ENCODE measurements at regions of chr1 and their contacts with region 1.

Region 1: DNA sequence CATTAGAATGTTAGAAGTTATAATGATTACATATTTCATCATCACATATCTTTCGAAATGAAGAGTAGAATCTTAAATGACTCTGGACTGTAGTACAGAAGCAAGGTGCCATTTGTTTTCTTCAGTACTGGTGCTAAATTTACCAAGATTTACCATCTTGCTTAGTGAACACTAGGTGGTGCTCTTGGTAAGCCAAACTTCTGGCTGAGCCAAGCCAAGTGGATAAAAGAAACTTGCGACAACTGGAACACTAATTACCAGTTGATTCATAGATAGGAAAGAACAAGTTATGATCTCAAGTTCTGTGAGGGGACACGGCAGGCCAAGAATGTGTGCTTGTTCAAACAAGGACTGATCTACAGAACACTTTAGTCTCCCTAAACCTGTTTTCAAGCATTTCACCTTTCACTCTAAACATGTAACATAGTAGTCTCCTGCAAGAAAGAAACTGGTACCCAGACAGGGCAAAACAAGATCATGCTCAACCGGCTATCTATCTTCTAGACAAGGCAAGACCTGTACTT is 19.8 kb downstream of the SPRTN start:
- DNase-seq: peak; percentile 42 to 74 (median 68)
- H3K4me3 ChIP-seq: no peak overlapping the region
- H3K4me3 Mint-ChIP-seq: no peak overlapping the region
- H3K27ac ChIP-seq: no peak overlapping the region
- H3K27ac Mint-ChIP-seq: peak overlapping the region in 1 of 7 donors; percentile 73
- H3K4me1 ChIP-seq: peaks cover 0 to 14% of the 10 kb centered on the region in 2 donors
- H3K4me1 Mint-ChIP-seq: peaks cover 13% of the 10 kb centered on the region
- H3K27me3 ChIP-seq: no peaks in the 10 kb centered on the region
- H3K27me3 Mint-ChIP-seq: no peaks in the 10 kb centered on the region
- CTCF ChIP-seq: peak; percentile 87

Region 2: GRCh38 chr1:231590453-231591198 is 232.7 kb after region 1 on chr1:
- intact Hi-C with region 1: loop called (anchors 5 kb)
- DNase-seq: peak; percentile 59 to 78 (median 69)
- H3K4me3 ChIP-seq: no peak overlapping the region
- H3K4me3 Mint-ChIP-seq: peak overlapping the region in 1 of 2 donors; percentile 28
- H3K27ac ChIP-seq: no peak overlapping the region
- H3K27ac Mint-ChIP-seq: peak overlapping the region in 1 of 7 donors; percentile 49
- H3K4me1 ChIP-seq: peaks cover 16 to 19% of the 10 kb centered on the region in 2 donors
- H3K4me1 Mint-ChIP-seq: peaks cover 19% of the 10 kb centered on the region
- H3K27me3 ChIP-seq: no peaks in the 10 kb centered on the region
- H3K27me3 Mint-ChIP-seq: peaks cover 2% of the 10 kb centered on the region in 3 donors
- CTCF ChIP-seq: peak; percentile 73